ENCODE measurements at regions of chr9 and their contacts with region 1.

Region 1: DNA sequence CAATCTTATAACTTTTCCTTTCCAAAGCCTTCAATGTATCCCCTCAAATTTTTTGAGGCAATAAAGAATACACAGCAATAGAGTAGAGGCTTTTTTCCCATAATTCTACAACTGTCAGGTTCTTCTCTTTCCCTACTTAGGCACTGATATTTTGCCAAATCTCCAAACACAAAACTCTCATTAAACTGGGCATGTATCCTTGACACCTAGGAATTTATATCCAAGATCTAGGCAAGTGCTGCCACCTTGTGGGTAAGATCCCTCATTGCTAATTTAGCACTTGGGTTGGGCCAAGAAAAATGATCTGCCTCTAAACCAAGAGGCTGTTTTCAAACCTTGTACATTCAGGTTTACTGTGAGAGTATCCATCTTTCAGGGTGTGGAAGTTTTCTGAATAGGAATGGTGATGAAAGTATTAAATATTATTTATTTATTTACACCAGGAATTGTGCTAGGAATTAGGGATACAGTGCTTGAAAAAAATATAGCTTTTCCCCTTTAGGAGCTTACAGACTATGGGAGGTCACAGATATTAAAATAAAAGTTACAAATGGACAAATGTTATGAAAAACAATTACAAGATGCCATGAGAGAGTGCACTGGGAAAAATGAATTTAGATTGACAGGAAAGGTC is 17.6 kb downstream of the TSTD2 start:
- DNase-seq: peak in 1 of 2 donors; percentile 53
- ATAC-seq: peak; percentile 86
- H3K4me3 ChIP-seq: no peak overlapping the region
- H3K27ac ChIP-seq: no peak overlapping the region
- H3K4me1 ChIP-seq: no peaks in the 10 kb centered on the region
- H3K27me3 ChIP-seq: no peaks in the 10 kb centered on the region

Region 2: DNA sequence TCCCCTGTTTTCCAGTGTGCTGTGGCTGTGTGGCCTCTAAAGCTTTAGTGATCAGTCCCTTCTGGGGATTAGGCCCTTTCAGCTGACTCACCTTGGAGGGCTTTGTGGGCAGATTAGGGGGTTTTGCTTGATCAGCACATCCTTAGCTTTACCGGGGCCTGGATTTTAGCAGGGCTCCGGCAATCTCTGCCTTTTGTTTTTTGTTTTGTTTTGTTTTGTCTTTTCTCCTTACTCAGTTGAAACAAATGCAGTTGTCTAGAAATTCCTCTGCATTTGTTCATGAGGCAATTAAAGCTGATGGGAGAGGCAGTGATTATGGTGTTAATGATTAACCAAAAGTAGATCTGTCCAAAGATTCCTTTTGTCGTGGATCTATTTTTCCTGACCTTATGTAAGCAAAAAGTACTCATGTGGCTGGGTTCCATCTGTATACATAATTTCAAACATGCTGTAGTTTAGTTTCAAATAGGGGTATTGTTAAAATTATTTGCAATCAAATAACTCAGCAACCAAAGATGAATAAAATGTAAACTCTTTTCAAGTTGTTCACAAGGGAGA is 208.9 kb before region 1 on chr9:
- intact Hi-C with region 1: loop called in 1 of 2 experiments (anchors 5 kb)
- DNase-seq: no peak
- ATAC-seq: no peak
- H3K4me3 ChIP-seq: no peak overlapping the region
- H3K27ac ChIP-seq: no peak overlapping the region
- H3K4me1 ChIP-seq: no peaks in the 10 kb centered on the region
- H3K27me3 ChIP-seq: no peaks in the 10 kb centered on the region

Region 3: DNA sequence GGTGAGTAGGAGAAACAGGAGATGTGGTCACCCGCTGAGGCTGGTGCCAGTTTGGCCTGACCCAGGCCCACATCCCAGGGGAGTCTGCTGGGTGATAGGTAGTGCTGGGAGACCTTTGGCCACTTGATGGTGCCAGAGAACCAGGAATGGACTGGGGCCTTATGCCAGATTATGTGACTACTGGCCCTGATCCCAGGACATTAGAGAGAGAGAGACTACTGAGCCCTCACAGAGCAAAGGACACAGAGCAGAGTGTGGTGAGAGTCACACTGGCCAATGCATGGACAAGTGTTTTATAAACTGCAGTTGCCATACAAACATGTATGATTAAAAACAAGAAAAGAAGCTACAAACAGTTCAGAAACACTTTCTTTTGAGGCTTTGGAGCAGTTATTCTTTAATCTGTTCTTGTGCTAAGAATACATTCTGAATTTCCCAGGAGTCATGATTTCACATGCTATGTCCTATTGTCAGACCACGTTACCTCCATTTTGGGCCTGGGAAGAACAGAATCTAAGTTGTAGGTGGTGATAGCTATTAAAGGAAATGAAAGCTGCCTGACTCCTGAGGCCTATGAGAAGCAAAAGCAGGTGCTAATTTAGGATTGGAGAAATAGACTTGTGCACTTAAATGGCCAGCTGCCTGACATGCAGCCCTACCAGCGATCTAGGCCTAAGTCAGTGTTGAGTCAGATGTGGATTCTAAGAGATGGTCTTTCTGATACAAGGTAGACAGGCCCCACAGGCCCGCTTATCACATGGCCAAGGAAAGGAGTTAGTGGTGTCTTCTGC is 146.7 kb before region 1 on chr9:
- intact Hi-C with region 1: loop called (anchors 1 kb)
- DNase-seq: peak; percentile 74 to 88
- ATAC-seq: peak; percentile 97
- H3K4me3 ChIP-seq: no peak overlapping the region
- H3K27ac ChIP-seq: peak overlapping the region in 1 of 2 donors; percentile 69
- H3K4me1 ChIP-seq: peaks cover 0 to 2% of the 10 kb centered on the region in 2 donors
- H3K27me3 ChIP-seq: no peaks in the 10 kb centered on the region

Region 4: GRCh38 chr9:97570899-97571298 is 44.7 kb before region 1 on chr9:
- intact Hi-C with region 1: no loop called
- DNase-seq: no peak
- ATAC-seq: no peak
- H3K4me3 ChIP-seq: no peak overlapping the region
- H3K27ac ChIP-seq: peak overlapping the region in 1 of 2 donors; percentile 14
- H3K4me1 ChIP-seq: no peaks in the 10 kb centered on the region
- H3K27me3 ChIP-seq: no peaks in the 10 kb centered on the region

Region 5: DNA sequence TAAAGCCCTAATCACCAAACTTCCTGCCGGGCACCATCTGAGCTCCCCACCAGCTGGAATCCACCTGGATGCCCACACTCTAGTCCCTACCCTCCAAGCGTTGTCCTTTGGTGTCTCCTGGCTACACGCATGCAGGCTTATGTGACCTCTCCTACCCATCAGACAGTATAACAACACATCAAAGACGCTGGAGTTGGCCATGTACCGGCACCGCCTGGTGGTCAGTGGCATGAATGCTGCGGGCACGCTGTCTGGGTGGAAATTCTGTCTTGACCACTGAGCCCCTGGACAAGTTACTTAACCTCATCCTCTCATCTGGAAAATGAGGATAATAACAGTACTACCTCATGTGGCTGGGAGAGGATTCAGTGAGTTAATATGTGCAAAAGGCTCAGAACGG is 600.3 kb after region 1 on chr9:
- intact Hi-C with region 1: no loop called
- DNase-seq: peak in 1 of 2 donors; percentile 25
- ATAC-seq: no peak
- H3K4me3 ChIP-seq: no peak overlapping the region
- H3K27ac ChIP-seq: no peak overlapping the region
- H3K4me1 ChIP-seq: no peaks in the 10 kb centered on the region
- H3K27me3 ChIP-seq: no peaks in the 10 kb centered on the region